ENCODE measurements at regions of chr6 and their contacts with region 1.

Region 1: DNA sequence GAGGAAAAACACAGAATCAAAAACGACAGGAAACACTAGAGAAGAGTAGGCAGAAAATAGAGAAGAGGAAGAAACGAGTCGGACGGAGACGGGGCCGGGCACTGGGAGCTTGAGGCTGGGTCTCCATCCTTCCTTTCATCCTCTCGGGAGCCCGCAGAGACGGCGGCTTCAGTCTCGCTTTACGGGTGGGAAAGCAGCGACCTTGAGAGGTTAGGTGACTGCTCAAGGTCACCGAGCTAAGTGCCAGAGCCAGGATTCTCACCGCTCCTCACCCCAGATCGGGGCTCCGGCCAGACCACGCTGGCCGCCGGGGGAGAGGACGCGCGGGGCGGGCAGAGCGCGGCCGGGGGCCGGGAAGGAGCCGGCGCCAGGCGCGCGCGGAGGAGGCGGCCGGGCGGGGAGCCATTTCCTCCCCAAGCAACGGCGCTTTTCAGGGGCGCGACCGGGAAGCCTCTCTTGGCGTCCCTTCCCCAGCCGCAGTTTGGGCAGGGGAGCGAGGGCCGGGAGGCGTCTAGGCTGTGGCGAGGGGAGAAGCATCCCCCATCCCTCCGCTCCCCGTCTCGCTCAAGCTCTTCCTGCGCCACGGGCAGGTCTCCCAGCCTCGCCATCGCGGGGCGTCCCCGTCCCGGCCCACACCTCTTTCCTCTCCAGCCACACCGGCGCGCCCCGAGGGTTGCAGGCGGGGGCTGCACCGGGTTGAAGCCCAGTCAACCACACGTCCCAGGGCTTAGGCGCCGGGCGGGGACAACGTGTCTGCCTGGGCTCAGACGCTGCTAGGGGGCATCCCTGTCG is 24.1 kb upstream of the MAP3K7 start:
- DNase-seq: peak; percentile 56
- H3K4me3 ChIP-seq: peak overlapping the region; percentile 67
- H3K27ac ChIP-seq: no peak overlapping the region
- H3K4me1 ChIP-seq: peaks cover 10% of the 10 kb centered on the region
- H3K27me3 ChIP-seq: no peaks in the 10 kb centered on the region
- CTCF ChIP-seq: no peak

Region 2: DNA sequence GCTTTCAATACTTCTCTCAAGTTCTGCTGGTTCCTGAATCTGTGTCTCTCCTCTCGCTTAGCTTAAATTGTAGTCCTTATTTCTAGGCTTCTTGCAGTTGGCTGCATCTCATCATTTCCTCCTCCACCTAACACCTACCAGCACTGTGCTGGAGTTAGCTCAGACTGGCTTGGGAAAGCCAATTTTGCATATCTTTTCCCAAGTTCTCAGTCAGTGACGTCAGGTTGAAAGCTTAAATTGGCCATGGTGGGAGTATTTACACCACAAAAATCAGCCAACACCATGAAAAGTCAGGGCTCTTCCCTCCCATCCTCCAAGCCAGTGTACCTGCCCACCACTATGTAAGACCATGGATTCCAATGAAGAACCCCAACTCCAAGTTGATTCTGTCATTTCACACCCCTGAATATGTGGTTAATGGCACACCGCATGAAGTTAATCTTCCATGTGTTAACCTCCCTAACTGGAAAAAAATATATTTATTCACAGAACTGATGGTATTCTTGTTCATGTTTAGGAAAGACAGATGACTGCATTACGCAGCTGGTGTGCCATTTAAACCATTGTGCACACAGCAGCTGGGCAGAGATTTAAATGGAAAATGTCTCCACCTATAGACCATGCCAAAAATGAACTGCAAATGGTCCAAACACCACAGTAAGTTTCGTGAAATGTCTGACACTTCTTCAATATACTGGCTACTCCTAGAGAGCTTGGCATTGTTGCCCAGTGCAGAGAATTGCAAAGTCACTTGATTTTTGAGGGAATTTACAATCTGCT is 250.1 kb after region 1 on chr6:
- CTCF ChIA-PET with region 1: no interaction called
- POLR2A ChIA-PET with region 1: no interaction called
- intact Hi-C with region 1: loop called (anchors 10 kb)
- DNase-seq: peak; percentile 46
- H3K4me3 ChIP-seq: no peak overlapping the region
- H3K27ac ChIP-seq: no peak overlapping the region
- H3K4me1 ChIP-seq: peaks cover 6% of the 10 kb centered on the region
- H3K27me3 ChIP-seq: peaks cover 15% of the 10 kb centered on the region
- CTCF ChIP-seq: peak; percentile 50